OCI-LY7 (cell line): ENCODE measurements at regions of chr20 and their contacts with region 1.

Region 1: DNA sequence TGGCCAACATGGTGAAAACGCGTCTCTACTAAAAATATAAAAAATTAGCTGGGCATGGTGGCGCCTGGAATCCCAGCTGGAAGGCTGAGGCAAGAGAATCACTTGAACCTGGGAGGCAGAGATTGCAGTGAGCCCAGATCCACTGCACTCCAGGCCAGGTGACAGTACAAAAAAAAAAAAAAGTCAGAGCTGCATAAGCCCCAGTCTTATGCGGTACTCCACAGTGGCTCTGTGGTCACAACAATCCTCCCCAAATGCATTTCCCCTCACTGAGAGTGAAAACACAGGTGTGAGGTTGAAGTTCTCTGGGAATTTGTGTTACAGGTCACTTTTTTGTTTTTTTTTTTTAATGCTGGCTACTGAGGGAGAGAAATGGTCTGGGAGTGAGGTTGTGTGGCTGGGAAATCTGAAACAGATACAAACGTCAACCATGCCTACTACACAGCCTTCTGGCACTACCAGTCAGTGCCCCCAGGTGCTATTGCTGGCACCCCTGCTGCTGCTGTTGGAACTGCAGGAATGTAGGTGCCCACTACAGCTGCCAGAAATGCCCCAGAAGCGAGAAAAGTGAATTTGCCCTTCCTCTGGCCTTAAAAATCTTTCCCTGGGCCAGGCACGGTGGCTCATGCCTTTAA is 5.7 kb downstream of the MRPS26 start:
- DNase-seq: no peak
- H3K4me3 ChIP-seq: no peak overlapping the region
- H3K27ac ChIP-seq: no peak overlapping the region
- H3K4me1 ChIP-seq: peaks cover 3% of the 10 kb centered on the region
- CTCF ChIP-seq: no peak

Region 2: GRCh38 chr20:3101737-3102574 is 50.5 kb after region 1 on chr20:
- CTCF ChIA-PET with region 1: no interaction called
- POLR2A ChIA-PET with region 1: no interaction called
- intact Hi-C with region 1: loop called (anchors 5 kb)
- DNase-seq: no peak
- H3K4me3 ChIP-seq: no peak overlapping the region
- H3K27ac ChIP-seq: no peak overlapping the region
- H3K4me1 ChIP-seq: no peaks in the 10 kb centered on the region
- CTCF ChIP-seq: no peak

Region 3: DNA sequence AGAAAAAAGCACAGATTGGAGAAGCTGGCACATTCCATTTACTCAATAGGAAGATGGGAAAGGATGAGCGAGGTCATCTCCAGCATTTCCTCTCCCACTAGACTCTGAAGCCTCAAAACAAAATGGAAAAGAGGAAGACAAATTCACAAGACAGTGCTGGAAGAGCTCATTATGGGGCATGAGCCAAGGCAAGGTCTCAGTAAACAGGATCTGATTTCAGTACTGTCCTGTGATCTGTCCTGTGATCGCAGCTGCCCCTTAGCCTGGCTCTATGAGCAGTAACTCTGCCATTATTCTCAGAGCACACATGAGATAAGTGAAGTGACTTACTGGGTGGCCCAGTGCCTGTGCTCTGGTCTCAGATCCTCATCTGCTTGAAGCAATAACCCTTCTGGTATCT is 255.6 kb after region 1 on chr20:
- CTCF ChIA-PET with region 1: no interaction called
- POLR2A ChIA-PET with region 1: no interaction called
- intact Hi-C with region 1: no loop called
- DNase-seq: no peak
- H3K4me3 ChIP-seq: no peak overlapping the region
- H3K27ac ChIP-seq: no peak overlapping the region
- H3K4me1 ChIP-seq: no peaks in the 10 kb centered on the region
- CTCF ChIP-seq: no peak